ENCODE measurements at regions of chr3 and their contacts with region 1.

Region 1: GRCh38 chr3:84904816-84905555 is 53.8 kb upstream of the CADM2 start:
- DNase-seq: peak in 1 of 3 donors; percentile 29
- ATAC-seq: no peak
- H3K4me3 ChIP-seq: no peak overlapping the region
- H3K4me1 ChIP-seq: no peaks in the 10 kb centered on the region
- CTCF ChIP-seq: no peak

Region 2: DNA sequence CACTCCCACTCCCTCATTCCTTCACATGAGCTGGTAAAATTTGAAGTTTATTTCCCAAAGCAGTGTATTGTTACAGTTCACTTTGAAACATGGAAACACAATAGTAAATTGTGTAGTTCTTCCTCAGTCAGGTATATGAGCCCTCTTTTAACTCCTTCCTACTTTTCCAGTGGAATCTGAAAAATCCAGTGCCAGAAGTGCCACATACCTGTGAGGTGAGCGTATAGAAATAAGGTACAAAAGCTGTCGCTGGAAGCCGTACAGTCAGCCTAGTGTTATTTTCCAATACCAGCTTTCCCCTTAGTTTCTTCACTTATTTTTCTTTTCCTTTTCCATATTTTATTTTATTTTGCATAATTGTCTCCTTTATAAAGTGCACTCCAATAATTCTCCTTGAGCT is 27.9 kb before region 1 on chr3:
- intact Hi-C with region 1: loop called in 1 of 2 experiments (anchors 2 kb)
- DNase-seq: no peak
- ATAC-seq: no peak
- H3K4me3 ChIP-seq: no peak overlapping the region
- H3K4me1 ChIP-seq: no peaks in the 10 kb centered on the region
- CTCF ChIP-seq: no peak